PC-9 (cell line): ENCODE measurements at regions of chr7 and their contacts with region 1.

Region 1: GRCh38 chr7:93715234-93715633 is 140.7 kb upstream of the CALCR start:
- DNase-seq: peak in 1 of 2 experiments; percentile 37
- H3K4me3 ChIP-seq: no peak overlapping the region
- H3K27ac ChIP-seq: no peak overlapping the region
- H3K4me1 ChIP-seq: no peaks in the 10 kb centered on the region
- H3K27me3 ChIP-seq: no peaks in the 10 kb centered on the region
- CTCF ChIP-seq: peak; percentile 53

Region 2: DNA sequence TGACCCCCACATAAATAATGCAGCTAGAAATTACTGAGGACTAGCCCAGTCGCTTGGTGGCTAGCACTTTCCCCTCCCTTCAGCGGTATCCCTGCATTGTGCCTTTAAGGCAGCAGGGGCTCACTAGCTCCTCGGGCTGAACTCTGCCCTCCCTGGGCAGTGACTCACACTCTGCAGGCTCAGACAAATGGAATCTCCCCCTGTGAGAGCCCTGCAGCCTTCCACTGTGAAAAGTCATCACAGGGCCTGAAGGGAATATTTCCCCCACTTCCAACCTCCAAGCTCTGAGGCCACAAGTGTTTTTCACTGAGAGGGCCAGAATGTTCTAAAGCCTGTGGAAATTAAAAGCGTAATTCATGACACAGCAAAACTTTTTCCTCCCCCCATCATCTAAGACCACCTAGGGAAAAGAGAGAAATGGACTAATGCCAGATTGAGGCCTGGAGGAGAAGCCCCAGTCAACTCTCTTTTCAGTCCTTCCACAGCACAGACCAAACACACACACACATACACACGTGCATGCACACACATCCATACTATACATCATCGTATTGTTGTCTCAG is 585.9 kb after region 1 on chr7:
- CTCF ChIA-PET with region 1: no interaction called
- POLR2A ChIA-PET with region 1: no interaction called
- intact Hi-C with region 1: no loop called
- DNase-seq: peak; percentile 87 to 88
- H3K4me3 ChIP-seq: 0 out of 2 replicates have a peak overlapping the region, but pooled peaks have one; percentile 2
- H3K27ac ChIP-seq: peak overlapping the region; percentile 86
- H3K4me1 ChIP-seq: peaks cover 31% of the 10 kb centered on the region
- H3K27me3 ChIP-seq: no peaks in the 10 kb centered on the region
- CTCF ChIP-seq: peak; percentile 15; the same call in 1 of the 2 replicates

Region 3: DNA sequence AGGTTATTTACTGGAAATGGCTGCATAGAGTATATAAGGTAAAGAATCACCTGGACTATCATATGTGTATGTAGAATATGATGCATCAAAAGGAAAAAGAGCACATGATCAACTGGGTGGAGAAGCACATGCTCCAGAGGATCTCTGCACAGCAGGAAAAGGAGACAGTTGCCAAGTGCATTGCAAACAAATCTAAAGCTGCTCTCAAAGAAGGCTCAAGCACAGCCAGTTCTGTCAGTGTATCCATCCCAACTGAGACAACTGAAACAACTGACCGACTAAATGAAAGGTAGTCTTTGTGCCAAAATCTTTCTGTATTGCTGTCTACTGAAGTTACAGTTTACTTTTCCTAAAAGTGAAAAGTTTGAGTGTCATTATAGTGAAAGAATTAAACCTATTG is 1023.9 kb after region 1 on chr7:
- CTCF ChIA-PET with region 1: no interaction called
- POLR2A ChIA-PET with region 1: no interaction called
- intact Hi-C with region 1: no loop called
- DNase-seq: no peak
- H3K4me3 ChIP-seq: no peak overlapping the region
- H3K27ac ChIP-seq: no peak overlapping the region
- H3K4me1 ChIP-seq: no peaks in the 10 kb centered on the region
- H3K27me3 ChIP-seq: no peaks in the 10 kb centered on the region
- CTCF ChIP-seq: no peak

Region 4: DNA sequence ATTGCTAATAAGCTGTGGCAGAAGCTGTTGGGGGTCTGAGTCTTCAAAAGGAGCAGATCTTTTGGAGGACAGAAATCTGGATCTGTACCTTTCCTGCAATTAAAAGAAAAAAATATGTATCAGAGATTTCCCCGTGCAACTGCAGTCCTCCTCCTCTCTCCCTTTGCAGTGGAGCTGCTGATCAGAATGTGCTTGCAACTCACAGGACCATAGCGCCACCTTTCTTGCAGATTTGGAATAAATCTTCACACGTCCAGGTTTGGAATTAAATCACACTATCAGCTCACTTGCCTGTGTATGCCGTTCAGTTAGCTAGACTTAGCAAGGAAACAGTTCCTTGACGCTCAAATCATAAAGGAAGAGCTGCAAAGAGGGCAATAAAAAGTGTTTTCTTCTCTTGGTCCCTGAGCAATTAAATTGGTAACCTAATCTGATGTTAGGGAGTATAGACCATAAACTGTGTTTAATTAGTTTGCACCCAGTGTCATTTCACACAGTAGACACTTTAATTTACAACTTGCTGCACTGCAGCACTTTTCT is 1531.7 kb after region 1 on chr7:
- CTCF ChIA-PET with region 1: no interaction called
- POLR2A ChIA-PET with region 1: no interaction called
- intact Hi-C with region 1: loop called (anchors 5 kb)
- DNase-seq: peak; percentile 47 to 48
- H3K4me3 ChIP-seq: no peak overlapping the region
- H3K27ac ChIP-seq: no peak overlapping the region
- H3K4me1 ChIP-seq: no peaks in the 10 kb centered on the region
- H3K27me3 ChIP-seq: no peaks in the 10 kb centered on the region
- CTCF ChIP-seq: peak; percentile 83